ENCODE measurements at regions of chr1 and their contacts with region 1.

Region 1: GRCh38 chr1:63593303-63593885 is at the start of gene PGM1:
- DNase-seq: peak; percentile 72
- H3K4me3 Mint-ChIP-seq: peak within 1 kb of the TSS; percentile 96
- H3K27ac Mint-ChIP-seq: peak within 1 kb of the TSS; percentile 92
- H3K4me1 Mint-ChIP-seq: peaks cover 23% of the 10 kb centered on the region
- H3K27me3 Mint-ChIP-seq: no peaks in the 10 kb centered on the region
- CTCF ChIP-seq: no peak
- total RNA-seq, gene PGM1: 60.2 and 77.9 TPM in 2 replicates

Region 2: DNA sequence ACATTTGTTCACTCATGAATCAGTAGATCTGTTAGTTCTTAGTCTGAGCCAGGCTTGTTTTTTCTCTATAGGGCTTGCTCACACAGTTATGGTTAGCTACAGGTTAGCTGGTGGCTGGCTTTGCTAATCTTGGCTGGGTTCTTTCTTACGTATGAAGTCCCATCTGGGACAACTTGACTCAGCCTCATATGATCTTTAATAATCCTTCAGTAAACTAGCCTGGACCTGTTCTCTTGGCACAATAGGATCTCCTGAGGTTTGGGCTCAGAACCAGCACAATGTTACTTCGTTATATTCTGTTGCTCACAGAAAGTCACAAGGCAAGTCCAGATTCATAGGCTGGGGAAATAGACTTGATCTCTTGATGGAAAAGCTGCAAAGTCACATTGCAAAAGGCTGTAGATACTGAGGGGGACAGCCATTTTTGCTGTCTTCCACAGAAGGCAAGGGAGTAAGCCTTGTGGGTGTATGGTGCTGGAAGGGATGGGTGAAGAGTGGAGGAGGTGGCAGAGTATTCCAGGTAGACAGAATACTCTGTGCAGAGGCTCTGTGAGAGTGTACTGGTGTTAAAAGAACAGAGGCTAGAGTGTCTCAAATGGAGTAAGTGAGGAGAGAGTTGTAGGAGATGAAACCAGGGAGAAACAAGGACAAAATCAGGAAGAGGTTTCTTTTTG is 45.6 kb before region 1 on chr1:
- CTCF ChIA-PET with region 1: no interaction called
- POLR2A ChIA-PET with region 1: interaction called, 13 read pairs
- intact Hi-C with region 1: no loop called
- DNase-seq: peak; percentile 78
- H3K4me3 Mint-ChIP-seq: peak overlapping the region; percentile 53
- H3K27ac Mint-ChIP-seq: peak overlapping the region; percentile 93
- H3K4me1 Mint-ChIP-seq: peaks cover 17% of the 10 kb centered on the region
- H3K27me3 Mint-ChIP-seq: no peaks in the 10 kb centered on the region
- CTCF ChIP-seq: no peak

Region 3: DNA sequence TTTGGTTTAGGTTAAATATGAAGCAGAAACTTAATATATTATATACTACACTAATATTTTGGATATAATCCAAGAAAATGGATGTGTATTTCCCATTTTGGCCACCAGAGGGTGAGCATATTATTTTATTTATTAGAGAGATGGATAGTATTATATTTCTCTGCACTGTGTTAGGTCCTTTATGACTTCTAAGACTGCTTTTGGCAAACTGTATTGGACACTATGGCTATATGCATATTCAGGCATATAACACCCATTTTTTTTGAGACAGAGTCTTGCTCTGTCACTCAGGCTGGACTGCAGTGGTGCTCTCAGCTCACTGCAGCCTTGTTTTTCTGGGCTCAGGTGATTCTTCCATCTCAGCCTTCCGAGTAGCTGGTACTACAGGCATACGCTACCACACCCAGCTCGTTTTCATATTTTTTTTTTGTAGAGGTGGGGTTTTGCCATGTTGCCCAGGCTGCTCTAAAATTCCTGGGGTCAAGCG is 18.0 kb before region 1 on chr1:
- CTCF ChIA-PET with region 1: interaction called, 7 read pairs
- POLR2A ChIA-PET with region 1: interaction called, 17 read pairs
- intact Hi-C with region 1: no loop called
- DNase-seq: peak; percentile 66
- H3K4me3 Mint-ChIP-seq: no peak overlapping the region
- H3K27ac Mint-ChIP-seq: no peak overlapping the region
- H3K4me1 Mint-ChIP-seq: peaks cover 7% of the 10 kb centered on the region
- H3K27me3 Mint-ChIP-seq: no peaks in the 10 kb centered on the region
- CTCF ChIP-seq: peak; percentile 40